GM12878 (cell line): ENCODE measurements at regions of chr2 and their contacts with region 1.

Region 1: GRCh38 chr2:127649684-127650040 is 3.7 kb downstream of the GPR17 start:
- DNase-seq: peak; percentile 7
- ATAC-seq: peak; percentile 93
- H3K4me3 ChIP-seq: no peak overlapping the region
- H3K27ac ChIP-seq: no peak overlapping the region
- H3K4me1 ChIP-seq: no peaks in the 10 kb centered on the region
- H3K27me3 ChIP-seq: no peaks in the 10 kb centered on the region
- CTCF ChIP-seq: peak; percentile 78 to 82 (median 80)
- EP300 ChIP-seq: no peak
- POLR2A ChIP-seq: no peak
- RAD21 ChIP-seq: peak; percentile 79

Region 2: GRCh38 chr2:127197475-127198385 is 451.9 kb before region 1 on chr2:
- CTCF ChIA-PET with region 1: interaction called, 5 read pairs
- POLR2A ChIA-PET with region 1: no interaction called
- RAD21 ChIA-PET with region 1: no interaction called
- SMC1A ChIA-PET with region 1: no interaction called
- in situ Hi-C with region 1: loop called (anchors 5 kb)
- intact Hi-C with region 1: loop called (anchors 1 kb)
- DNase-seq: peak; percentile 9
- ATAC-seq: peak; percentile 99
- H3K4me3 ChIP-seq: peak overlapping the region; percentile 2; the same call in 1 of the 2 replicates
- H3K27ac ChIP-seq: no peak overlapping the region
- H3K4me1 ChIP-seq: no peaks in the 10 kb centered on the region
- H3K27me3 ChIP-seq: no peaks in the 10 kb centered on the region; a peak in 1 of 4 replicates
- CTCF ChIP-seq: peak; percentile 58 to 78 (median 70)
- EP300 ChIP-seq: no peak
- POLR2A ChIP-seq: no peak
- RAD21 ChIP-seq: peak; percentile 62

Region 3: DNA sequence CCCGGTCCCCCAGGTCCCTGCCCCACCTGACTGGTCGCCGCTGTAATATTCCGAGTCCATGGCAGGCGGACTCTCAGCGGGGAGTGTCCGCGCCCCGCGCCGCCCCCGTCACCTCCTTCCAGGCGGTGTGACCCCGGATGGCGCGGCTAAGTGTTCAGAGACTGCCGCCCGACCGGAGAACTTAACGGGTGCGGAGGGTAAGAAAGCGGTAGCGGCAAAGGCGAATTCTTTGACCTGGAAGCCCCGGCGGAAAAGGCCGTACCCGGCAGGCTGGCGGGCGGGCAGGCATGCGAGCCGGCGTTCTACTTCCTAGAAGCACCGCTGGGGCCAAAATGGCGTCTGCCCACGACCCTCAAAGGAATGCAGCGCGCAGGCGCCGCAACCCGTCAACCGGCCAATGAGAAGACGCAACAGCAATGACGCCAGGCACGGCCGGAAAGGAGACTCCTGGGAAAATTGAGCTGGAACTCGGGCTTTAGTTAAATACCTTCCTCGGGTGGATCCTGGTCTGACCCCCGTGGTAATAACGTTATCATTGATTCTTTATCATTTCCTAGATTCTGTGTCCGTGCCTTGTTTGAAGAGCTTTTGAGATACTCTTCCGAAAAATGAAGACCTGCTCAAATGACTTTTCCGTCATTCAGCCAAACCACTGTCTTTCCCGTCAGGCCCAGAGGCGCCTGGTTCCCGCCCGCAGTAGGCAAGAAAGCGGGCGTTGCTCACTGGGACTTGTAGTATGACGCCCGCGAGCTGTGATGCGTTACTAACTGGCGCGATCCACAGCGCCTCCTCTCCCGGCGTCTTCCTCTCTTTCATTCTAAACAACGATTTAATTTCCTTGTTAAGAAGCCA is 123.3 kb before region 1 on chr2 and contains the start of gene IWS1:
- CTCF ChIA-PET with region 1: interaction called, 7 read pairs
- POLR2A ChIA-PET with region 1: no interaction called
- RAD21 ChIA-PET with region 1: no interaction called
- SMC1A ChIA-PET with region 1: interaction called, 3 read pairs
- in situ Hi-C with region 1: no loop called
- intact Hi-C with region 1: loop called (anchors 5 kb)
- DNase-seq: peak; percentile 88
- ATAC-seq: peak; percentile 93
- H3K4me3 ChIP-seq: peak within 1 kb of the TSS; percentile 93
- H3K27ac ChIP-seq: peak within 1 kb of the TSS; percentile 83
- H3K4me1 ChIP-seq: no peaks in the 10 kb centered on the region
- H3K27me3 ChIP-seq: no peaks in the 10 kb centered on the region
- CTCF ChIP-seq: peak in 2 of 3 experiments; percentile 3 to 21; a peak in 1 of 6 replicates
- EP300 ChIP-seq: no peak
- POLR2A ChIP-seq: peak; percentile 91
- RAD21 ChIP-seq: no peak
- polyA plus RNA-seq, gene IWS1: 21.9 to 34.2 TPM

Region 4: DNA sequence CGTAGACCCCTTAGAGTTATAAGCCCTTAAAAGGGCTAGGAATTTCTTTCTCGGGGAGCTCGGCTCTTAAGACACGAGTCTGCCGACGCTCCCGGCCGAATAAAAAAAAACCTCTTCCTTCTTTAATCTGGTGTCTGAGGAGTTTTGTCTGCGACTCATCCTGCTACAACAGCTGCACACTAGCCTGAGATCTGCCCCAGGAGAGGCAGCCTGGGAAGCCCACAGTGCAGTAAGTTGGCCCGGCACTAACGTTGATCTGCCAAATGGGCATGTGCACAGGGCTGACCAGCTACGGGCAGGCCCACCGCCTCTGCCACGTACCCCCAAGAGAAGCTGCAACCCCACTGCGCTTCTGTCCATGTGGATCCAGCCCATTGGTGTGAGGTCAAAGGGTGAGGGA is 34.1 kb after region 1 on chr2:
- CTCF ChIA-PET with region 1: no interaction called
- POLR2A ChIA-PET with region 1: no interaction called
- RAD21 ChIA-PET with region 1: no interaction called
- SMC1A ChIA-PET with region 1: no interaction called
- in situ Hi-C with region 1: no loop called
- intact Hi-C with region 1: no loop called
- DNase-seq: no peak
- ATAC-seq: no peak
- H3K4me3 ChIP-seq: no peak overlapping the region
- H3K27ac ChIP-seq: no peak overlapping the region
- H3K4me1 ChIP-seq: no peaks in the 10 kb centered on the region
- H3K27me3 ChIP-seq: peaks cover 0 to 2% of the 10 kb centered on the region in 2 experiments; a peak in 2 of 4 replicates
- CTCF ChIP-seq: no peak
- EP300 ChIP-seq: no peak
- POLR2A ChIP-seq: no peak
- RAD21 ChIP-seq: no peak